SK-N-SH (cell line): ENCODE measurements at regions of chr16 and their contacts with region 1.

Region 1: DNA sequence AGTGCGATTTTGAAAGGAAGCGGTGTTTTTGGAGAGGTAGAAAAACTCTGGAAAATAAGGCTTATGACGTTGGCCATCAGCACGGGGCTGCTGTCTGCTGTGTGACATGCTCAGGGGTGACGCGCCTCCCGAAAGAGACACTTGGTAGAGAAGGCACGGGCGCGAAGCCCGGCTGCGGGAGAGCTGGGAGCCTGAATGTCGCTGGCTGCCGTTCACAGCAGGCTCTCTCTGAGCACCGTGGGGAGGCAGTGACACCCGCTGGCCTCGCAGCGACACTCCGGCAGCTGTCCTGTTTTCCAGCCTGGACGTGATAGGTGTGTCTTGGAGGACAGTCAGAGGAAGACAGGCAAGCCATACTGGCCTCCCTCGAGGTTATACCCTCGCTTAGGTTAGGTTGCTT is 759.1 kb upstream of the RBFOX1 start:
- DNase-seq: peak; percentile 80
- H3K4me3 ChIP-seq: no peak overlapping the region; a peak in 1 of 4 replicates
- H3K27ac ChIP-seq: no peak overlapping the region
- H3K4me1 ChIP-seq: peaks cover 0 to 6% of the 10 kb centered on the region in 2 experiments; a peak in 1 of 4 replicates
- H3K27me3 ChIP-seq: no peaks in the 10 kb centered on the region
- CTCF ChIP-seq: no peak
- EP300 ChIP-seq: no peak
- RAD21 ChIP-seq: peak; percentile 92

Region 2: DNA sequence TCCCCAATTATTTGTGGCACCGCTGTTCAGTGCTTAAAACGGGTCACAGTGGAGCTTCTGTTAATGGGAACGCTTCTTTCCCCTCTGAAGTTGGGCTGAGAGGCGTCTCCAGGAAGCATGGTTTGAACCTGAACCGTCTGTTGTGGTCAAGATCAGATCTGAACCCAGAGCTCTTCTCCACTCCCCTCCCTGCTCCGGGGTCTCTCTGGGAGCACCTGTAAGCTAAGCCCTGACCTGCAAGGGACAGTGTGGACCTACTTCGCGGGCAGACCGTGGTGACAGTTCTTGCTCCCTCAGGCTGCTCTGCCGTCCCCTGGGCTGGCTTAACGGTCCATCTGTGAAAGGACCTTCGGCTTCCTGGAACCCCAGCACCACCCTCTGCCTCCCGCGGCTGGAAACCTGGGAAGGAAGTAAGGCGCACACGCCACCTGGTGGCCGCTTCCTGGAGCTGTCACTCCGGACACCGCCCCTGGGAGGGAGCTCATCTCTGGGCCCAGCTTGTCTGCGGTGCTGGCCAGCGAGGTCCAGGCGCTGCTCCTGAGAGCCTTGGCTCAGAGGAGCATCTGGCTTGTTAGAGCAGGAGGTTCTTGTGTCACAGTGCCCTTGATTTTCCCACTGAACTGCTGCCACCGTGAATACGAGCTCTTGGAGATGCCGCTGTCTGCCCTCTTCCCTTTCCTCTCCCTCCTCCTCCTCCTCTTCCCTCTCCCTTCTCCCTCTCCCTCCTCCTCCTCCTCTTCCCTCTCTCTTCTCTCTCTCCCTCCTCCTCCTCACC is 957.5 kb before region 1 on chr16:
- CTCF ChIA-PET with region 1: interaction called, 10 read pairs
- POLR2A ChIA-PET with region 1: no interaction called
- DNase-seq: peak; percentile 84
- H3K4me3 ChIP-seq: peak overlapping the region in 1 of 2 experiments; percentile 47; a peak in 2 of 4 replicates
- H3K27ac ChIP-seq: peak overlapping the region in 1 of 2 experiments; percentile 96; a peak in 2 of 4 replicates
- H3K4me1 ChIP-seq: peaks cover 0 to 53% of the 10 kb centered on the region in 2 experiments; a peak in 2 of 4 replicates
- H3K27me3 ChIP-seq: no peaks in the 10 kb centered on the region
- CTCF ChIP-seq: peak; percentile 41
- EP300 ChIP-seq: peak in 1 of 2 experiments; percentile 41; a peak in 1 of 4 replicates
- RAD21 ChIP-seq: peak; percentile 76

Region 3: GRCh38 chr16:6016530-6017184 is 556.9 kb before region 1 on chr16:
- CTCF ChIA-PET with region 1: interaction called, 10 read pairs
- POLR2A ChIA-PET with region 1: no interaction called
- DNase-seq: peak; percentile 59
- H3K4me3 ChIP-seq: no peak overlapping the region; a peak in 1 of 4 replicates
- H3K27ac ChIP-seq: no peak overlapping the region
- H3K4me1 ChIP-seq: peaks cover 0 to 8% of the 10 kb centered on the region in 2 experiments; a peak in 1 of 4 replicates
- H3K27me3 ChIP-seq: no peaks in the 10 kb centered on the region
- CTCF ChIP-seq: 0 out of 2 replicates have a peak, but pooled peaks have one; percentile 16
- EP300 ChIP-seq: no peak
- RAD21 ChIP-seq: peak; percentile 73

Region 4: GRCh38 chr16:6081320-6081976 is 492.1 kb before region 1 on chr16:
- CTCF ChIA-PET with region 1: interaction called, 22 read pairs
- POLR2A ChIA-PET with region 1: no interaction called
- DNase-seq: peak; percentile 57
- H3K4me3 ChIP-seq: no peak overlapping the region; a peak in 1 of 4 replicates
- H3K27ac ChIP-seq: no peak overlapping the region
- H3K4me1 ChIP-seq: peaks cover 0 to 2% of the 10 kb centered on the region in 2 experiments; a peak in 1 of 4 replicates
- H3K27me3 ChIP-seq: no peaks in the 10 kb centered on the region
- CTCF ChIP-seq: peak; percentile 40
- EP300 ChIP-seq: no peak
- RAD21 ChIP-seq: peak; percentile 79

Region 5: DNA sequence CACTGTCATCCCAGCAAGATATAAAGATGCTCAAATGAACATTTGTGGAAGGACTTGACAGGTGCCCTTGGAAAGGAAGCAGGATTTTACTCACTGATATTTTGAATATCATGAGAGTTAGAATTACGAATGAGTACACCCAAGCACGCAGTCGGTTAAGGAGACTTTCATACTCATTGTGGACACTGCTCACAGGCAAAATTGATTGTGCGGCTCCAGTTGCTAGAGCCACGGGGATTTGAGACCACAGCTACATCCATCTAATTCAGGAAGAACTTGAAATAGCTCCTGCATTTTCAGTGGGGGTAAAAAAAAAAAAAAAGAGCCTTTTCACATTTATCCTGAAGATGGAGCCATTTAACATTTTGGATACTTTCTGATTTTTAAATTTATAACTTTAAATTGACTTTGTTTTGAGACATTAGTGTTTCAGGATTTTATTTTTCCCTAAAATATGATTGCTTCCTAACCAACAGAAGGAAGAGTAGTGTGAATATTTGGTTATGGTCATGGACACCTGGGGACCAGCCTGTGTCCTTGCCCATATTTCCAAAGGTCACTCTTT is 395.9 kb before region 1 on chr16:
- CTCF ChIA-PET with region 1: interaction called, 19 read pairs
- POLR2A ChIA-PET with region 1: no interaction called
- DNase-seq: no peak
- H3K4me3 ChIP-seq: no peak overlapping the region
- H3K27ac ChIP-seq: no peak overlapping the region
- H3K4me1 ChIP-seq: no peaks in the 10 kb centered on the region
- H3K27me3 ChIP-seq: no peaks in the 10 kb centered on the region
- CTCF ChIP-seq: no peak
- EP300 ChIP-seq: no peak
- RAD21 ChIP-seq: peak; percentile 38

Region 6: GRCh38 chr16:6562986-6563385 is 10.6 kb before region 1 on chr16:
- CTCF ChIA-PET with region 1: interaction called, 12 read pairs
- POLR2A ChIA-PET with region 1: no interaction called
- DNase-seq: no peak
- H3K4me3 ChIP-seq: no peak overlapping the region
- H3K27ac ChIP-seq: no peak overlapping the region
- H3K4me1 ChIP-seq: no peaks in the 10 kb centered on the region
- H3K27me3 ChIP-seq: no peaks in the 10 kb centered on the region
- CTCF ChIP-seq: no peak
- EP300 ChIP-seq: no peak
- RAD21 ChIP-seq: no peak

Region 7: GRCh38 chr16:6643080-6643686 is 69.6 kb after region 1 on chr16:
- CTCF ChIA-PET with region 1: interaction called, 15 read pairs
- POLR2A ChIA-PET with region 1: interaction called, 5 read pairs
- DNase-seq: peak; percentile 36
- H3K4me3 ChIP-seq: no peak overlapping the region; a peak in 1 of 4 replicates
- H3K27ac ChIP-seq: no peak overlapping the region
- H3K4me1 ChIP-seq: no peaks in the 10 kb centered on the region; a peak in 1 of 4 replicates
- H3K27me3 ChIP-seq: no peaks in the 10 kb centered on the region
- CTCF ChIP-seq: peak; percentile 83
- EP300 ChIP-seq: no peak
- RAD21 ChIP-seq: peak; percentile 91

Region 8: DNA sequence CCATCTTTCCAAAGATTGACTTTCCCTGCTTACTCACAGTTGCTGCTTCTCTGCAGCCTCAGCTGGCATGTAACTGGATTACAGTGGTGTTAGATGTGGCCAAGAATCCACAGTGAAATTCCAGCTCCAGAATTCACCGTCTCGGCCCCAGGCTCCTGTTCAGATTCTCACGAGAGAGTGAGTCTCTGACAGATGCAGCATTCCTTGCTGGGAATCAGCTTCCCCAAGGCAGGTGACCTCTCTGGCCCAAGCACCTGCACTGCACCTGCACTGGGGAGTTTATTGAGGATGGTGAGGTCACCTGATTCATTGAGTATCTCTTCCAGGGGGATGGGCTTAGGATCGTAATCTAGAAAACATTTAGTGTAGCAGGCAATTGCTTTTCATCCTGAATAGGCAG is 158.6 kb after region 1 on chr16:
- CTCF ChIA-PET with region 1: no interaction called
- POLR2A ChIA-PET with region 1: no interaction called
- DNase-seq: no peak
- H3K4me3 ChIP-seq: no peak overlapping the region
- H3K27ac ChIP-seq: no peak overlapping the region
- H3K4me1 ChIP-seq: no peaks in the 10 kb centered on the region
- H3K27me3 ChIP-seq: no peaks in the 10 kb centered on the region
- CTCF ChIP-seq: no peak
- EP300 ChIP-seq: no peak
- RAD21 ChIP-seq: no peak